ENCODE measurements at regions of chr1 and their contacts with region 1.

Region 1: GRCh38 chr1:224513787-224514209 is 79.2 kb upstream of the WDR26 start:
- DNase-seq: peak; percentile 89
- H3K4me3 Mint-ChIP-seq: no peak overlapping the region
- H3K27ac Mint-ChIP-seq: no peak overlapping the region
- H3K4me1 Mint-ChIP-seq: peaks cover 23% of the 10 kb centered on the region
- H3K27me3 Mint-ChIP-seq: peaks cover 4% of the 10 kb centered on the region

Region 2: GRCh38 chr1:224497714-224498573 is 15.9 kb before region 1 on chr1:
- CTCF ChIA-PET with region 1: interaction called, 22 read pairs
- DNase-seq: peak; percentile 80
- H3K4me3 Mint-ChIP-seq: peak overlapping the region; percentile 34
- H3K27ac Mint-ChIP-seq: peak overlapping the region; percentile 90
- H3K4me1 Mint-ChIP-seq: peaks cover 59% of the 10 kb centered on the region
- H3K27me3 Mint-ChIP-seq: peaks cover 3% of the 10 kb centered on the region

Region 3: GRCh38 chr1:224623743-224624333 is 110.0 kb after region 1 on chr1:
- CTCF ChIA-PET with region 1: interaction called, 16 read pairs
- DNase-seq: peak; percentile 91
- H3K4me3 Mint-ChIP-seq: peak overlapping the region; percentile 26
- H3K27ac Mint-ChIP-seq: peak overlapping the region; percentile 87
- H3K4me1 Mint-ChIP-seq: peaks cover 23% of the 10 kb centered on the region
- H3K27me3 Mint-ChIP-seq: peaks cover 81% of the 10 kb centered on the region

Region 4: DNA sequence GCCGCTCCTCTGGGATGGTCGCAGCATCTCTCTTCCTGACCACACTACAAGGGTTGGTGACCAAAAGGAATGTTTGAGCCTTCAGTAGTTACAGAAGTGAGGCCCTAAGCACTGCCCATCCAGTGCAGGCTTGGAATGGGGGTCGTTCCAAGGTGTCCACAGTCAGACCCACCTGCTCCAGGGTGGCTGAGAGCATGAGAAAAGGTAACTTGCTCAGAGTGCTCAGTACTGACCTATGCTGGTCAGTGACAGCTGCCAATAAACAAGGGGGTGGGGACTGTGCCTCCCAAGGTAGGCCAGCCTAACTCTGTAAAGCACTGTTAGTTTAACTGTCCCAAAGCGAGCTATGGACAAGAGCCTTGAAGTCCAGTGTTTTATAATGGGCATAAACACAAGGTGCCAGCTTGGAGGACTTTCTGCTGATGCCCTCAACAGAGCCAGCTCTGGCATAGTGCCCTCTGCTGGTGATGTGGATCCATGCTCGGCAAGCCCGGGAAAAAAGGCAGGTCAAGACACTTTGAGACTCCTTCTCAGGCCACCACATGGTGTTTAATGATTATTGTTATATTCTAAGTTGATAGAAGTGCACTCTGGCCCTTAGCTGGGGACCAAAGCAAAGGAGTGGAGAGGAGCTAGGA is 337.5 kb after region 1 on chr1:
- CTCF ChIA-PET with region 1: interaction called, 164 read pairs
- DNase-seq: peak; percentile 67
- H3K4me3 Mint-ChIP-seq: no peak overlapping the region
- H3K27ac Mint-ChIP-seq: peak overlapping the region; percentile 58
- H3K4me1 Mint-ChIP-seq: no peaks in the 10 kb centered on the region
- H3K27me3 Mint-ChIP-seq: peaks cover 6% of the 10 kb centered on the region